Prostate gland (tissue), 2 donors: ENCODE measurements at regions of chr18 and their contacts with region 1.

Region 1: GRCh38 chr18:32637226-32637625 is 135.6 kb downstream of the KLHL14 start:
- DNase-seq: no peak
- H3K4me3 ChIP-seq: no peak overlapping the region
- H3K27ac ChIP-seq: no peak overlapping the region
- H3K4me1 ChIP-seq: no peaks in the 10 kb centered on the region
- H3K27me3 ChIP-seq: no peaks in the 10 kb centered on the region
- CTCF ChIP-seq: no peak
- POLR2A ChIP-seq: no peak

Region 2: DNA sequence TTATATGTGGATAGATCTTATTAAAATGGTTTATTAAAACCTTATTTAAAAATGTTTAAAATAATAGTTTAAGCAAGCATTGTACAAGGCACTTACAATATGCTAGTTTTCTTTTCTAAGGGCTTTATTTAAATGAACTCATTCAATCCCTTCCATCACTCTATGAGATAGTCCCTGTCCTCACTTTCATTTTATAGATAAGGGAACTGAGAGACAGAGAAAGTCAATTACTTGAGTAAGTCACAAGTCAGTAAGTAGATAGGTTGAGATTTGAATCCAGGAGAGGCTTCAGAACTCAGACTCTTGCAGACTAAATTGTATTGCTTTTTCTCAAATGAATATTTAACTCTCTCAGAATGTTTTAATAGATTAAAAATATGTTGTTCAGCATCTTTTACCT is 40.4 kb after region 1 on chr18:
- intact Hi-C with region 1: loop called (anchors 5 kb)
- DNase-seq: no peak
- H3K4me3 ChIP-seq: no peak overlapping the region
- H3K27ac ChIP-seq: no peak overlapping the region
- H3K4me1 ChIP-seq: no peaks in the 10 kb centered on the region
- H3K27me3 ChIP-seq: no peaks in the 10 kb centered on the region
- CTCF ChIP-seq: no peak
- POLR2A ChIP-seq: no peak